Transverse colon (tissue), 4 donors: ENCODE measurements at regions of chr17 and their contacts with region 1.

Region 1: DNA sequence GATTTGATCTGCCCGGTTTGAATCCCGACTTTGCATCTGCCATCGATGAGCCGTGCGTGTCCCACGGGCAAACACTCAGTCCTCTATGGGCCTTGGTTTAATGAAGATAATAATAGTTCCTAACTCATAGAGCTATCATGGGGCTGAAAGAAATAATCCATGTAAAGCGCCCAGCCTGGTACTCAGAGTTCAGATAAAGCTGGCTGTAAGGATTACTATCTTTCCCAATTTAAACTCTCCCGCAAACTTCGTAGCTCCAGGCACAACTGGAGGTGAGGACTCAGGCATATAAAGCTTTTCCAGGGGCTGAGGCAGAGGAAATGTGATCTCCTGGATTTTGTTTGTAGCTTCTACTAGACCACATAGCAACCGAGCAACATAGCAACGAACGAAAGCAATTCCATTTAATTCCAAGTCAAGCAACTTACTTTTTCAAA is 16.3 kb downstream of the ALOX15 start:
- DNase-seq: no peak
- H3K4me3 ChIP-seq: no peak overlapping the region
- H3K27ac ChIP-seq: no peak overlapping the region
- H3K4me1 ChIP-seq: peaks cover 0 to 12% (median 0%) of the 10 kb centered on the region in 4 donors
- H3K27me3 ChIP-seq: no peaks in the 10 kb centered on the region
- CTCF ChIP-seq: no peak
- EP300 ChIP-seq: no peak
- POLR2A ChIP-seq: no peak

Region 2: GRCh38 chr17:4412933-4413831 is 212.0 kb before region 1 on chr17:
- in situ Hi-C with region 1: loop called in 1 of 4 experiments (anchors 10 kb)
- intact Hi-C with region 1: no loop called
- DNase-seq: peak; percentile 94
- H3K4me3 ChIP-seq: no peak overlapping the region
- H3K27ac ChIP-seq: no peak overlapping the region
- H3K4me1 ChIP-seq: peaks cover 0 to 5% (median 0%) of the 10 kb centered on the region in 4 donors
- H3K27me3 ChIP-seq: no peaks in the 10 kb centered on the region
- CTCF ChIP-seq: peak; percentile 82 to 94 (median 88)
- EP300 ChIP-seq: no peak
- POLR2A ChIP-seq: no peak

Region 3: DNA sequence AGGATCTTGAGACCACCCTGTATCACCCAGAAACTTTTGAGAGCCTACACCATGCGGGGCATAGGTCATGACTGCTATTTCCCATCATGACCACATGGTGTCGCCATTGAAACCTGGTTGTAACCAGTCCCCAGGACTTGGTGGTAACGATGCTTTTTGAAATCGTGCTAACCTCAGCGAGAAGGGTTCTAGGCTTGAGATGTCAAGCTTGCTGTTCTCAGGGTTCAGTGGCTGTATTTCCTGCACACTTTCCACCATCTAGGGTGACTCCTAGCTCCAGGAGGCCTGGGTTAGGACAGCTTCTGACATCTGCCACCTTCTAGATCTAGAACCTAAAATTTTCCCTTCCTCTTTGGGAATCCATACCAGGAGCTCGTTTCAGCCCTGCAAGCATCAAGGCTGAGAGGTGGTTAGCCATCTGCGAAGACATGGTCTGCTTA is 204.5 kb before region 1 on chr17:
- in situ Hi-C with region 1: loop called (anchors 10 to 25 kb)
- intact Hi-C with region 1: no loop called
- DNase-seq: peak; percentile 66
- H3K4me3 ChIP-seq: no peak overlapping the region
- H3K27ac ChIP-seq: no peak overlapping the region
- H3K4me1 ChIP-seq: peaks cover 0 to 5% (median 2%) of the 10 kb centered on the region in 4 donors
- H3K27me3 ChIP-seq: no peaks in the 10 kb centered on the region
- CTCF ChIP-seq: peak; percentile 78 to 88 (median 85)
- EP300 ChIP-seq: no peak
- POLR2A ChIP-seq: no peak

Region 4: GRCh38 chr17:4565209-4566141 is 59.7 kb before region 1 on chr17:
- in situ Hi-C with region 1: loop called (anchors 5 to 10 kb)
- intact Hi-C with region 1: loop called (anchors 5 kb)
- DNase-seq: peak; percentile 77
- H3K4me3 ChIP-seq: no peak overlapping the region
- H3K27ac ChIP-seq: peak overlapping the region in 2 of 4 donors; percentile 23 to 55
- H3K4me1 ChIP-seq: peaks cover 12 to 39% (median 23%) of the 10 kb centered on the region in 4 donors
- H3K27me3 ChIP-seq: no peaks in the 10 kb centered on the region
- CTCF ChIP-seq: peak; percentile 68 to 82 (median 79)
- EP300 ChIP-seq: no peak
- POLR2A ChIP-seq: no peak

Region 5: DNA sequence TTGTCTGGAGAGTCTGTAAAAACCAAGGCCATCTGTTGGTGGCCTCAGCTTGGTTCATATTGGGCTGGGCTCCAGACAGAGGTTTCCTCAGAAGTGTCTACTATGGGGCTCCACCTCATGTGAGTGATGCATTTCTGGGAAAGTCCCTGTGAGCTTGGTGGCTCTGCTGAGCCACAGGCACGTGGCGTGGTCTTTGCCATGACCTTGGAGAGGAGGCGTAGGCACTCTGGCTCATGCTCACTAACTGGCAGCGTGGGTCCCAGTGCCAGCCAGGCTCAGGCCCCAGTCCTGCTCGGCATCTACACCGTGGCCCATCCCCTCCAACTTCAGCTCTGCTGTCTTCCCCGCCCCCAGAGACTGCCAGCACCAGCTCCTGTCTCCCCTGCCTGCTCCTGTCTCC is 51.5 kb before region 1 on chr17:
- in situ Hi-C with region 1: loop called (anchors 5 to 10 kb)
- intact Hi-C with region 1: loop called (anchors 5 kb)
- DNase-seq: no peak
- H3K4me3 ChIP-seq: no peak overlapping the region
- H3K27ac ChIP-seq: no peak overlapping the region
- H3K4me1 ChIP-seq: no peaks in the 10 kb centered on the region
- H3K27me3 ChIP-seq: no peaks in the 10 kb centered on the region
- CTCF ChIP-seq: no peak
- EP300 ChIP-seq: no peak
- POLR2A ChIP-seq: no peak

Region 6: DNA sequence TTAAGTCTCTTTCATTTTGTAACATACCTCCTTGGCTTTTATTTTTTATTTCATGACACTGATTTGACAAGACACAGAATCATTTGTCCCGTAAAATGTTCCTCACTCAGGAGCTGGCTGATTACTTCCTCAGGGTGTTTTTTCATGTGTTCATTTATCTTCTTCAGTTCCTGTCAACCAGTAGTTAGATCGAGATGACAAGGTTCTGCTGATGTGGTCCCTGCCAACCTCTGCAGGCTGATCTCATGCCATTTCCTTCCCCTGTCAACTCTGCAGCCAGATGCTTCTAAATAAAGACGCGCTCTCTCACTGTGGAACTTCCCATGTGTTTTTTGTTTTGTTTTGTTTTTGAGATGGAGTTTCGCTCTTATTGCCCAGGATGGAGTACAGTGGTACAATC is 122.6 kb after region 1 on chr17:
- in situ Hi-C with region 1: no loop called
- intact Hi-C with region 1: no loop called
- DNase-seq: no peak
- H3K4me3 ChIP-seq: no peak overlapping the region
- H3K27ac ChIP-seq: no peak overlapping the region
- H3K4me1 ChIP-seq: peaks cover 0 to 10% (median 5%) of the 10 kb centered on the region in 4 donors
- H3K27me3 ChIP-seq: peaks cover 35% of the 10 kb centered on the region
- CTCF ChIP-seq: no peak
- EP300 ChIP-seq: no peak
- POLR2A ChIP-seq: no peak